GM10248 (cell line): ENCODE measurements at regions of chr15 and their contacts with region 1.

Region 1: GRCh38 chr15:90221246-90221900 is 12.4 kb downstream of the CIB1 start:
- DNase-seq: peak; percentile 78
- CTCF ChIP-seq: peak; percentile 77

Region 2: DNA sequence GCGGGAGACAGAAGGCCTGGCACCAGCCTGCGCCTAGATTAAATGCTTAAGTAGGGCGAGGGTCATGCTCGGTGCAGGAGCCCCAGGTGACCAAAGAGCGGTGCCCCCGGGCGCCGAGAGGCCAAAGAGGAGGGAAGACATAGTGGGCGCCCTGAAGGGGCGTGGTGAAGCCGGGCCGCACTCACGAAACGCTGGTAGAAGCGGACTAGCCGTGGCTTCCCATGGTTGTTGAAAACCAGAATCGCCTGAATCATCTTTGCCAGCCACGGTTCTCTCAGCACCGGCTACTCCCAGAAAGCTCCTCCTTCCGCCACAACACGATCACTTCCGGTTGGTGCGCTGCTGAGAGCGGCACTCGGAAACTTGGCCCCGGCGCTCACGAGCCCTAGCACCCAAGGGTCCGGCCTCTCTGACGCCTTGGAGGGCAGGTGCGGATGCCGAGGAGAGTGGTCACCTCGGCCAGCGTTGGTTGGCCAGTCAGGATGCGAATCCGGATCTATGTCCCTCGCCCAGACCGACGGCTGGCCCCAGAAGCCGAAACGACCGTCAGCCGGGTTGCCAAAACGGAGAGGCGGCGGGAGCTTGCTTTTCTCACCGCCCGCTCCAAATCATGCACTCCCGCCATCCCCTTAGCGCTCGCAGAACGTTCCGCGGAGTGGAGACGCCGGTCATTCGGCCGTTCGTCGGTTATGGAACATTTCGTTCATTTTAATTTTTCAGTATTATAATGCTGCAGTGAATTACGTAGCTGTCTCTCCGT is 327.5 kb before region 1 on chr15 and contains the start of gene AP3S2:
- CTCF ChIA-PET with region 1: no interaction called
- POLR2A ChIA-PET with region 1: no interaction called
- DNase-seq: peak; percentile 88
- CTCF ChIP-seq: no peak

Region 3: DNA sequence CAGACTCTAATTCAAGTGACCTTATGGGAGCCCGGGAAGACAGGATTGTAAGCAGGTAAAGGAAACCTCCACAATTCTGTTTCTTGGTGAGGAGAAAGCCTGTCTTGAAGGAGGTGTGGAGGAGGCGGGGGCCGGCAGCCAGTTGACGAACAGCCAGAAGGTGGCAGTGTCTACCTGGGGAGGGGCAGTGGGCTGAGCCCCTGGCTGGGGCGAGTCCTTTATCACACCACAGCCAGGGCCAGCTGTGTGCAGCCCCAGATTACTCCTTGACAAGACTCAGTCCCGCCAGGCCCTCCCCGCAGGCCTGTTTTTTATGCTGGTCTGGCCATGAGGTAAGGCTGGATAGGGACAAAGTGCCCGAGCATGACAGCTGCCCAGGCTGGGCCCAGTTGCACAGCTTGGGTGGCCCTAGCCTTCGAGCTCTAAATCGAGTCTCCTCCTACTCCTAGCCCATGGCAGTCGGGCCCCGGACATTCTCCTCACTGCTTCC is 78.2 kb before region 1 on chr15:
- CTCF ChIA-PET with region 1: interaction called, 26 read pairs
- POLR2A ChIA-PET with region 1: no interaction called
- DNase-seq: peak; percentile 80
- CTCF ChIP-seq: peak; percentile 66

Region 4: GRCh38 chr15:90151989-90152645 is 69.3 kb before region 1 on chr15:
- CTCF ChIA-PET with region 1: interaction called, 26 read pairs
- POLR2A ChIA-PET with region 1: no interaction called
- DNase-seq: no peak
- CTCF ChIP-seq: no peak

Region 5: DNA sequence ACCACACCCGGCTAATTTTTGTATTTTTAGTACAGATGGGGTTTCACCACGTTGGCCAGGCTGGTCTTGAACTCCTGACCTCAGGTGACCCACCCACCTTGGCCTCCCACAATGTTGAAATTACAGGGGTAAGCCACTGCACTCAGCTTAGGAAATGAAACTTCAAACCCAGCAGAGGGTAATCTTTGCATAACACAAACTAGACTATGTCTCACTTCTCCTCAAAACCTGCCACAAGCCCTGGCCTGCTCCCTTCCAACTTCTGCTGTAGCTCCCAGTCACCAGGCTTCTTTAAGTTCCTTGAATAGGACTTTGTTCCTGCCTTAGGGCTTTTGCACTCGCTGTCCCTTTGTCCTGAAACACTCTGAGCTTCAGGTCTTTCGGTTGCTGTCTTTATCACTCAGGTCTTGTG is 59.4 kb before region 1 on chr15:
- CTCF ChIA-PET with region 1: interaction called, 14 read pairs
- POLR2A ChIA-PET with region 1: no interaction called
- DNase-seq: no peak
- CTCF ChIP-seq: no peak

Region 6: GRCh38 chr15:90201130-90201949 is 20.0 kb before region 1 on chr15 and contains the start of gene SEMA4B:
- CTCF ChIA-PET with region 1: interaction called, 25 read pairs
- POLR2A ChIA-PET with region 1: no interaction called
- DNase-seq: peak; percentile 92
- CTCF ChIP-seq: no peak

Region 7: DNA sequence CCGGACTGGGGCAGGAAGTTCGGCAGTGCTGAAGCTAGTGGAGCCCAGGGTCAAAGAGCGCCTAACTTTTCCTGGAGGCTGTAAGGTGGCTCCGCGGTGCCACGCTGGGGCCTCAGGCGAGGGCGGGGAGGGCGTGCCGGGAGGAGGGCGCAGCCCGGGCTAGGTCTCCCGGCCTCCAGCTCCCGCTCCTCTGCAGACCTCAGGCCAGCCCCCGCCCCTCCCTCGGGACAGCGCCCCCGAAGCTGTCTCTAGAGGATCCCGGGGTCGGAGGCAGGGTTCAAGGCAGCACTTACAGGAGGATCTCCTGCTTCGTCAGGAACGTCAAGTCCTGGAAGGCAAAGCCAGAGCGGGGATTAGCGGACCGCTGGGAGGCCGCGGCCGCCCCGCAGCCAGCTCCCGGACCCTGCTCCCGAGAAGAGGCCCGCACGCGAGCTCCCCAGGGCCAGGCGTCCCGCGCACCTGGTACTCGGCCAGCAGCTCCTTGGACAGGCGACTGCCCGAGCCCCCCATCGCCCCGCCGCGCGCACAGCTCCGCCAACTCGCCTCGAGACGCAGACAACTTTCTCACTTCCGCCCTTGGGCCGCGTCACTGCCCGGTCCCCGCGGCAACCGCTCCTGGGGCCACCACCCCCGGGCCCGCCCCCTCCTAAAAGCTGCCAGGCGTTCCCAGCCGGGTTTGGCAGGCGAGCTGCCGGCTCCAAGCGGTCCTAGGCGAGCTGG is 12.2 kb after region 1 on chr15 and contains the start of gene CIB1:
- CTCF ChIA-PET with region 1: interaction called, 63 read pairs
- POLR2A ChIA-PET with region 1: interaction called, 4 read pairs
- DNase-seq: peak; percentile 99
- CTCF ChIP-seq: peak; percentile 31